ENCODE measurements at regions of chr10 and their contacts with region 1.

Region 1: DNA sequence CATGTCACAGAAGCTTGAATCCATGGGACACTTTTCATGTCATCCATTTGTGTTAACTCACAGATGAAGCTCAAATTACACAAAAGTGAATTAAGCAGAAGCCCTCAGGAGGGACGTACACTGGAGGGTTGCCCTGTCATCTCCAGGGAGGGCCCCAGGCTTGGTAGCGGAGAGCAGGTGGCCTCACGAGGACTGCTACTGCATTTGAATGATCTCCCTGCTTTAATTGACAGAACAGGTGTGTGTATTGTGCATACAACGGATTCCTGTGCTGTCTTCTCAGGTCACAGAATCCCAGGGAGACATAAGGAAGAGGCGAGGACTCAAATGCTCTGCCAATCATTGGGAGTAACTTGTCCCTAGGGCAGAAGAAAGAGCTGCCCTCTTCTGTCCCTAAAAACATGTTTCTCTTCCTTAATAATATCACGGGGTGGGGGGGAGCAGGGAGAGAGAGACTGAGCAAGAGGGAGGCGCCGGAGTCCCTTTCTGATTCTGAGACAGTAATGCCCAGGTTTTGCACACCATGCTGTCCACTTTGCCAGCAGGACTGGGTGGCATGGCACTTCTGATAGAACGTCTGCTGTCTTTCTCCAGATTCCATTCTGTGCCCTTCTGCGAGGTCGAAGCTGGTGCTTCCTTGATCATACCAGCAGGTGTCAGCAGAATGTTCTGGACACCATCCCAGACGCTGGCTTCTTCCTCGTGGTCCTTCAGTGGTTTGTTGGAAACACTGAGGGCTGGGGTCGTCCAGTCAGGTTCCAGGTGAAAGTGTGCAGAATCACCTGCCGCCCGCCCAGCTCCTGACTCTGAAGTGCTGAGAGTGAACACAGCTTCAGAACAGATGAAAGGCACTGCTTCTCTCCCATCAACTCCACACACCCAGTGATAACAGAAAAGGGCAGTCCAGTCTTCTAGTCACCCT is 26.2 kb upstream of the RASGEF1A start:
- DNase-seq: peak in 12 of 14 experiments; percentile 25 to 75 (median 43)
- ATAC-seq: peak; percentile 63
- H3K4me3 ChIP-seq: no peak overlapping the region
- H3K4me3 Mint-ChIP-seq: no peak overlapping the region
- H3K27ac ChIP-seq: peak overlapping the region in 1 of 2 donors; percentile 73
- H3K27ac Mint-ChIP-seq: peak overlapping the region; percentile 50
- H3K4me1 ChIP-seq: peaks cover 50% of the 10 kb centered on the region
- H3K4me1 Mint-ChIP-seq: peaks cover 59% of the 10 kb centered on the region
- H3K27me3 ChIP-seq: no peaks in the 10 kb centered on the region
- H3K27me3 Mint-ChIP-seq: peaks cover 12% of the 10 kb centered on the region
- CTCF ChIP-seq: peak; percentile 72

Region 2: GRCh38 chr10:43204943-43205671 is 87.9 kb before region 1 on chr10:
- CTCF ChIA-PET with region 1: no interaction called
- POLR2A ChIA-PET with region 1: no interaction called
- intact Hi-C with region 1: no loop called
- DNase-seq: peak; percentile 25 to 76 (median 41)
- ATAC-seq: peak; percentile 63
- H3K4me3 ChIP-seq: no peak overlapping the region
- H3K4me3 Mint-ChIP-seq: no peak overlapping the region
- H3K27ac ChIP-seq: no peak overlapping the region
- H3K27ac Mint-ChIP-seq: peak overlapping the region; percentile 24
- H3K4me1 ChIP-seq: peaks cover 22% of the 10 kb centered on the region
- H3K4me1 Mint-ChIP-seq: peaks cover 6% of the 10 kb centered on the region
- H3K27me3 ChIP-seq: no peaks in the 10 kb centered on the region
- H3K27me3 Mint-ChIP-seq: no peaks in the 10 kb centered on the region
- CTCF ChIP-seq: peak; percentile 70

Region 3: DNA sequence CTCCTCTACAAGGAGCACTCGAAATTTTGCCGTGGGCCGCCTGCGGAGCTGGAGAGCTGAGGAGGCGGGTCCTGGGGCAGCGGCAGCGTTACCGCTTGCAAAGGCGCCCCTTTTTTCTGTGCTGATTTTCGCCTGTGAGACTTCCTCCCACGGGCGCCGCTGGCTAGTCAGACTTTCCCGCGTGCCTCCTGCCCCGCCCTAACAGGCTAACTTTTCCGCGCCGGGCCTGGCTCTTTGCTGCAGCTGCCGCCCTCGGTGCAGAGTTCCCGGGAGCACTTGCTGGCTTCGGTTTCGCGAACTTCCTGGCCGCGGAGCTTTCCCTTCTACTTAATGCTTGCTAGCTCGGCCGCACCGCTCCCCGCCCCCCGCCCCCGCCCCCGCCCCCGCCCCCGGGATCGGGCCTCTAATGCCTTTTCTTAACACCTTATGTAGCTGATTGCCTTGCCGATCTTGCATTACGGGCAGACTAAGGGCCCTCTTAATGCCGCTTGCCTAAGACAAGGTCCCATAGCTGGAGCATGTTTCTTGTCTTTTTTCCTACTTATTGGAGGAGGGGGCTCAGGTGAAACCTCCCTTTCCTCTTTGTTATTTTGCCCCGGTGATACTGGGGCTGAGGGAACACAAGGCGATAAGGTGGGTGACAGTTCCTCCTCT is 11.8 kb after region 1 on chr10:
- CTCF ChIA-PET with region 1: interaction called, 17 read pairs
- POLR2A ChIA-PET with region 1: interaction called, 10 read pairs
- intact Hi-C with region 1: loop called in 1 of 2 experiments (anchors 2 kb)
- DNase-seq: peak in 13 of 14 experiments; percentile 21 to 75 (median 50)
- ATAC-seq: peak; percentile 61
- H3K4me3 ChIP-seq: peak overlapping the region; percentile 52
- H3K4me3 Mint-ChIP-seq: peak overlapping the region; percentile 58
- H3K27ac ChIP-seq: no peak overlapping the region
- H3K27ac Mint-ChIP-seq: peak overlapping the region; percentile 29
- H3K4me1 ChIP-seq: peaks cover 39% of the 10 kb centered on the region
- H3K4me1 Mint-ChIP-seq: peaks cover 56% of the 10 kb centered on the region
- H3K27me3 ChIP-seq: no peaks in the 10 kb centered on the region
- H3K27me3 Mint-ChIP-seq: peaks cover 8% of the 10 kb centered on the region
- CTCF ChIP-seq: no peak

Measured in CD4-positive, alpha-beta T cell (primary cell).